Vagina (tissue), 2 donors: ENCODE measurements at regions of chr14 and their contacts with region 1.

Region 1: GRCh38 chr14:22472935-22473854 is 115.8 kb downstream of the DAD1 start:
- DNase-seq: no peak
- H3K4me3 ChIP-seq: no peak overlapping the region
- H3K27ac ChIP-seq: no peak overlapping the region
- H3K4me1 ChIP-seq: peaks cover 46% of the 10 kb centered on the region
- H3K27me3 ChIP-seq: no peaks in the 10 kb centered on the region
- CTCF ChIP-seq: peak in 2 of 3 experiments; percentile 48 to 60
- POLR2A ChIP-seq: no peak

Region 2: GRCh38 chr14:22168092-22168955 is 304.9 kb before region 1 on chr14:
- intact Hi-C with region 1: no loop called
- DNase-seq: no peak
- H3K4me3 ChIP-seq: no peak overlapping the region
- H3K27ac ChIP-seq: no peak overlapping the region
- H3K4me1 ChIP-seq: no peaks in the 10 kb centered on the region
- H3K27me3 ChIP-seq: no peaks in the 10 kb centered on the region
- CTCF ChIP-seq: no peak
- POLR2A ChIP-seq: no peak

Region 3: GRCh38 chr14:22386924-22387775 is 86.0 kb before region 1 on chr14:
- intact Hi-C with region 1: loop called (anchors 5 kb)
- DNase-seq: peak in 1 of 2 donors; percentile 69
- H3K4me3 ChIP-seq: no peak overlapping the region
- H3K27ac ChIP-seq: no peak overlapping the region
- H3K4me1 ChIP-seq: no peaks in the 10 kb centered on the region
- H3K27me3 ChIP-seq: no peaks in the 10 kb centered on the region
- CTCF ChIP-seq: peak; percentile 54 to 87 (median 71)
- POLR2A ChIP-seq: no peak

Region 4: GRCh38 chr14:22418631-22419030 is 54.6 kb before region 1 on chr14:
- intact Hi-C with region 1: no loop called
- DNase-seq: no peak
- H3K4me3 ChIP-seq: no peak overlapping the region
- H3K27ac ChIP-seq: no peak overlapping the region
- H3K4me1 ChIP-seq: no peaks in the 10 kb centered on the region
- H3K27me3 ChIP-seq: no peaks in the 10 kb centered on the region
- CTCF ChIP-seq: no peak
- POLR2A ChIP-seq: no peak

Region 5: DNA sequence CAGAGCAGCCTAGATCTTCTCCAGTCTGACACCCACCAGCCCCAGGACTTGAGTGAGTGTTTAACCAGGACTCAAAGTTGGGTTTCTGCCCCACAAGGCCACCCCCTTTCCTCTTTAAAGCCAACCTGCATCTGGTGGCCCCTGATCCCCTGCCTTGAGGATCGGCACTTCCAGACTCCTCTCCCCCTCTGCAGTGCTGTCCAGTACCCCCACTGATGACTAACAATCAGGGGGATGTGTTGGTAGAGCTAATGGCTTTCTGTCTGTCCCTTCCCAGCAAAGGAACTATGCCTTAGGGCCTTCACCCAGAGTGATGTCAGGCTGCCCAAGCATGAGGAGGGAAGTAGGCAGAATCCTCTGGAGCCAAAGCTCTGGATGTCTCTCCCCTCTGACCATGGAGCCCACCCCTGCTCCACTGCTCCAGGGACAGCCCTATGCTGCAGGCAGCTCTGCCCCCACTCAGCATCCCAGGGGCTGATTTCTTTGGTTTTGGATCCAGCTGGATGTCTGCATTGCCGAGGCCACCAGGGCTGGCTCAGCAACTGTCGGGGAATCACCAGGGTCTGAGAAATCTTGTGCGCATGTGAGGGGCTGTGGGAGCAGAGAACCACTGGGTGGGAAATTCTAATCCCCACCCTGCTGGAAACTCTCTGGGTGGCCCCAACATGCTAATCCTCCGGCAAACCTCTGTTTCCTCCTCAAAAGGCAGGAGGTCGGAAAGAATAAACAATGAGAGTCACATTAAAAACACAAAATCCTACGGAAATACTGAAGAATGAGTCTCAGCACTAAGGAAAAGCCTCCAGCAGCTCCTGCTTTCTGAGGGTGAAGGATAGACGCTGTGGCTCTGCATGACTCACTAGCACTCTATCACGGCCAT is 72.9 kb after region 1 on chr14:
- intact Hi-C with region 1: no loop called
- DNase-seq: no peak
- H3K4me3 ChIP-seq: no peak overlapping the region
- H3K27ac ChIP-seq: peak overlapping the region; percentile 87
- H3K4me1 ChIP-seq: peaks cover 44% of the 10 kb centered on the region
- H3K27me3 ChIP-seq: no peaks in the 10 kb centered on the region
- CTCF ChIP-seq: no peak
- POLR2A ChIP-seq: no peak

Region 6: GRCh38 chr14:22814941-22815713 is 341.9 kb after region 1 on chr14 and contains the start of gene SLC7A7:
- intact Hi-C with region 1: no loop called
- DNase-seq: no peak
- H3K4me3 ChIP-seq: no peak within 1 kb of the TSS
- H3K27ac ChIP-seq: peak within 1 kb of the TSS; percentile 50
- H3K4me1 ChIP-seq: peaks cover 9% of the 10 kb centered on the region
- H3K27me3 ChIP-seq: no peaks in the 10 kb centered on the region
- CTCF ChIP-seq: no peak
- POLR2A ChIP-seq: no peak
- total RNA-seq, gene SLC7A7: 7.4 TPM